PC-3 (cell line): ENCODE measurements at regions of chr14 and their contacts with region 1.

Region 1: GRCh38 chr14:34081576-34082136 is 130.8 kb upstream of the EGLN3 start:
- DNase-seq: peak; percentile 91
- ATAC-seq: peak; percentile 81
- H3K4me3 ChIP-seq: peak overlapping the region; percentile 49
- H3K27ac ChIP-seq: peak overlapping the region; percentile 69
- H3K4me1 ChIP-seq: peaks cover 62% of the 10 kb centered on the region
- H3K27me3 ChIP-seq: no peaks in the 10 kb centered on the region
- CTCF ChIP-seq: no peak

Region 2: GRCh38 chr14:34030864-34031263 is 50.8 kb before region 1 on chr14:
- CTCF ChIA-PET with region 1: no interaction called
- POLR2A ChIA-PET with region 1: interaction called, 10 read pairs
- intact Hi-C with region 1: no loop called
- DNase-seq: no peak
- ATAC-seq: no peak
- H3K4me3 ChIP-seq: no peak overlapping the region
- H3K27ac ChIP-seq: no peak overlapping the region
- H3K4me1 ChIP-seq: no peaks in the 10 kb centered on the region
- H3K27me3 ChIP-seq: no peaks in the 10 kb centered on the region
- CTCF ChIP-seq: no peak

Region 3: DNA sequence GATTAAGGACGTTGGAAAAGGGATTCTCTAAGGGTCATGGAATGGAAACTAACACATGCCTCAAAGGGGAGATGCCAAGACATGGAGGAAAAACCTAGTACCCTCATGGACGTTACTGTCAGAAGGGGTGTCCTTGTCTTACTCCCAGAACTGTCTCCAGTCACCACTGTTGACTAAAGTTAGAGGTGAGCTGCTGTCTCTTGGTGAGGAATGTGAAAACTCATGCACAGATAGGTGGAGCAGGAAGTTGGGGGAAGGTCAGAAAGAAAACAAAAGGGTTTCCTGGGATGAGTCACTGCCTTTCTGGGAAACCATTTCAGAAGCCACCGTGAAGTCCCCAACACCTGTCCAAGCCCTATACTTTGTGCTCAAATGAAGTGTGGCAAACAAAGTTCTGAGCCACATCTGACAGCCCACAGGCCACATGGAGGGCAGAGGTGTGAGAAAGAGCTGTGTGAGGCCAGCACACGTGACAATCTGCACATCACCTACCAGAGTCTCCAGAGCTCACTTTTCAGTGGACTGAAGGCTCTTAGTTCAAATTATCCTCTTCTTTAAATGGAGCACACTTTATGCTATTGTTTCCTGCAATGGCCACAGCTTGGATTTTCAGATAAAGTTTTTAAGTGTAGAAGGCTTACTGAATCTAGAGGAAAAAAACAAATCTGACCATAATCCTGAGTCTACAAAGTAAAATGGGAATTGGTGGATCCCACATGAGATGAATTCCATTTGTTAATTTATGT is 37.9 kb before region 1 on chr14:
- CTCF ChIA-PET with region 1: no interaction called
- POLR2A ChIA-PET with region 1: no interaction called
- intact Hi-C with region 1: loop called (anchors 1 kb)
- DNase-seq: peak; percentile 90
- ATAC-seq: peak; percentile 99
- H3K4me3 ChIP-seq: no peak overlapping the region
- H3K27ac ChIP-seq: peak overlapping the region; percentile 45
- H3K4me1 ChIP-seq: peaks cover 17% of the 10 kb centered on the region
- H3K27me3 ChIP-seq: no peaks in the 10 kb centered on the region
- CTCF ChIP-seq: no peak

Region 4: DNA sequence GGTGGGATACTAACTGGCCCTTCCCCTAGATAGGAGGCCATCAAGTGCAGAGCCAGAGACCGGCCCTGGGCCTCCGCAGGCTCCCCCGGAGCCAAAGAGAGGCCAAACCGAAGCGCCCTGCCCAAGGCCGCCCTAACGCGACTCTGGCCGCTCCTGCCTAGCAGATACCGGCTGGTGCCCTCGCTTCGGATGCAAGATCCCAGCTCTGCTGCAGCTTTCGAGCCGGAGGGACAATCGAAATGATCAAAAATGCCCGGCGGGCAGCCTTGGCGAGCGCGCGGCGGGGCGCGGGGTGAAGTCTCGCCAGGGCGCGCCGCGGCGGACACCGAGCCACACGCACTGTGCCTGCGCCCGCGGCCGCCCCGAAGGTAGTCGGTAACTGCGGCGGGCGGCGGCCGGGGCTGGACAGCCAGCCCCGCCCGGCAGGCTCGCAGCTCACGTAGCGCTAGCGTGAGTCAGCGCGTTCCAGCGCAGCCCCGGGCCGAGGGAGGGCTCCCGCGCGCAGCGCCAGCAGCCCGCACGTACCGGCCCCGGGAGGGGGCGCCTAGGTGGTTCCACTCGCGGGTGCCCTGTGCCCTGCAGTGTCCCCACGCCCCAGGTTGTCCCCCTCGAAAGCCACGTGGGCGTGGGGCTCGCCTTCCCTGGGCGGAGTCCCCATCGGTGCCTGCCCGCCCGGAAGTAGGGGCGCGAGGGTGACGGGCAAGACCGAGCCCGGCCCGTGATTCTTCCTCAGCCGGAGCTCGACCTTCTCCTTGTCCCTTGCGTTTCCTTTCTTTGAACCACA is 21.6 kb before region 1 on chr14:
- CTCF ChIA-PET with region 1: no interaction called
- POLR2A ChIA-PET with region 1: no interaction called
- intact Hi-C with region 1: loop called (anchors 1 kb)
- DNase-seq: peak; percentile 89
- ATAC-seq: peak; percentile 97
- H3K4me3 ChIP-seq: peak overlapping the region; percentile 67
- H3K27ac ChIP-seq: no peak overlapping the region
- H3K4me1 ChIP-seq: peaks cover 17% of the 10 kb centered on the region
- H3K27me3 ChIP-seq: no peaks in the 10 kb centered on the region
- CTCF ChIP-seq: peak; percentile 47; the same call in 1 of the 2 replicates

Region 5: DNA sequence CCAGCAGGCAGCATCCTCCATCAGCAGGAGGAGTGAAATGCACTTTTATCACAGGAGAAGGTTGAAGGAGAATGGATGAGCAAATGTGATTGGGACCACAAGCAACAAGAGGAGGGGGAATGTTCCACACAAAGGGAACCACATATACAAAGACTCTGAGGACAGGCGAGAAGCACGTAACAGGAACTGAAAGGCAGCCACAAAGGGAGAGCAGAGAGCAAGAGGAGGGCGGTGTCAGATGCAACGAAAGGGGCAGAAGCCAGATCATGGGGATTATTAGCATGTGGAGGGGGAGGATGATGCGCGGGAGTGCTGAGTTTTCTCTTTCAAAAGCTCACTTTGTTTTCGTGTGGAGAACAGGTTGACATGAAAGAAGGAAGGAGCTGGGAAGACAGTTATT is 139.3 kb after region 1 on chr14:
- CTCF ChIA-PET with region 1: no interaction called
- POLR2A ChIA-PET with region 1: no interaction called
- intact Hi-C with region 1: no loop called
- DNase-seq: no peak
- ATAC-seq: no peak
- H3K4me3 ChIP-seq: no peak overlapping the region
- H3K27ac ChIP-seq: no peak overlapping the region
- H3K4me1 ChIP-seq: peaks cover 20% of the 10 kb centered on the region
- H3K27me3 ChIP-seq: no peaks in the 10 kb centered on the region
- CTCF ChIP-seq: no peak